ENCODE measurements at regions of chr4 and their contacts with region 1.

Region 1: GRCh38 chr4:21765810-21766407 is 182.7 kb downstream of the KCNIP4 start:
- DNase-seq: peak; percentile 61
- H3K4me3 ChIP-seq: no peak overlapping the region
- H3K27ac ChIP-seq: no peak overlapping the region
- H3K4me1 ChIP-seq: peaks cover 12% of the 10 kb centered on the region
- H3K27me3 ChIP-seq: peaks cover 3% of the 10 kb centered on the region; the same call in 1 of the 2 replicates

Region 2: GRCh38 chr4:20773144-20773997 is 992.5 kb before region 1 on chr4:
- in situ Hi-C with region 1: loop called (anchors 25 kb)
- DNase-seq: peak; percentile 82
- H3K4me3 ChIP-seq: 0 out of 2 replicates have a peak overlapping the region, but pooled peaks have one; percentile 11
- H3K27ac ChIP-seq: no peak overlapping the region
- H3K4me1 ChIP-seq: no peaks in the 10 kb centered on the region
- H3K27me3 ChIP-seq: no peaks in the 10 kb centered on the region

Region 3: DNA sequence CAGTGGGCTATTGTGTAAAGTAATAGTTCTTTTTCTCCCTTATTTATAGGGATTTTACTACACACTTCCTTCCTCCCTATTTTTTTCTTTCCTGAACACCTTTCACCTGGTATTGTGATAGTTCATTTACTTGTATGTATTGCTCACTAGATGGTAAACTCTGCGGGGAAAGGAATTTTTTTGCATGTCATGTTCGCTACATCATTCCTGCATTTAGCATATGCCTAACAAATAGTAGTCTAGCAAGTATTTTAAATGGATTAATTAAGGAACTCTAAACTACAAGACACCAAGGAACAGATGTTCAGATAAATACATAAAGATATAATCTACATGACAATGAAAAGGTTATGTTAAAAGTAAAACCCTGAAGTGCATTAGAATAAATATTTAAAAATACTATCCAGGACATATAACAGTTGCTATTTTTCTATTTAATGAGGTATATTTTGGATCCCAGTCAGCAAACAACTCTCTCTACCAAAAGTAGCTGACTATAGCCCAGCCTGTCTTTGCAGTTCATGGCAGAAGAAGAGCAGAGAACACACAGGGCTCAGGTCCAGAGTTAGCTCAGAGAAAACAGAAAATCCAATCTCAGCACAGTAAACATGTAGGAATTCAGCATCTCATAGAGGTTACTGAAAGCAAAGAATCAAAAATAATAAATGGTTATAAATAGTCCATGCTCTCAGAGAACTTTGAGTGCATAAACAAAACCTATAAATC is 977.8 kb before region 1 on chr4:
- in situ Hi-C with region 1: no loop called
- DNase-seq: no peak
- H3K4me3 ChIP-seq: no peak overlapping the region
- H3K27ac ChIP-seq: no peak overlapping the region
- H3K4me1 ChIP-seq: no peaks in the 10 kb centered on the region
- H3K27me3 ChIP-seq: no peaks in the 10 kb centered on the region

Region 4: DNA sequence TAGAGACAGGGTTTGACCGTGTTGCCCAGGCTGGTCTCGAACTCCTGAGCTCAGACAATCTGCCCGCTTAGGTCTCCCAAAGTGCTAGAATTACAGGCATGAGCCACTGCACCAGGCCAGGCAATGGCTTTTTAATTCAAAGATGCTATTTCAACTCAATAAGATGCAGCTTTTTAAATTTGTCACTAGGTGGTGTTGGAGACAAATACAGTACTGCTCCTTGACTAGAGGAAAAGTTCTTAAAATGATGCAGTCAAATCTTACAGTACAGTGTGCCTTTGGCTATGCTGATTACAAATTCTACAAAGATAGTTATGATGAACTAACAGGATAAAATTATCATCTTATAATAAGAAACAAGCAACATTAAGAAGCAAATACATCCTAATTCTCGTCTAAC is 258.5 kb before region 1 on chr4:
- in situ Hi-C with region 1: loop called (anchors 10 kb)
- DNase-seq: peak; percentile 40
- H3K4me3 ChIP-seq: no peak overlapping the region
- H3K27ac ChIP-seq: no peak overlapping the region
- H3K4me1 ChIP-seq: no peaks in the 10 kb centered on the region
- H3K27me3 ChIP-seq: peaks cover 30% of the 10 kb centered on the region

Measured in GM23248 (cell line).